AG04450 (cell line): ENCODE measurements at regions of chr1 and their contacts with region 1.

Region 1: DNA sequence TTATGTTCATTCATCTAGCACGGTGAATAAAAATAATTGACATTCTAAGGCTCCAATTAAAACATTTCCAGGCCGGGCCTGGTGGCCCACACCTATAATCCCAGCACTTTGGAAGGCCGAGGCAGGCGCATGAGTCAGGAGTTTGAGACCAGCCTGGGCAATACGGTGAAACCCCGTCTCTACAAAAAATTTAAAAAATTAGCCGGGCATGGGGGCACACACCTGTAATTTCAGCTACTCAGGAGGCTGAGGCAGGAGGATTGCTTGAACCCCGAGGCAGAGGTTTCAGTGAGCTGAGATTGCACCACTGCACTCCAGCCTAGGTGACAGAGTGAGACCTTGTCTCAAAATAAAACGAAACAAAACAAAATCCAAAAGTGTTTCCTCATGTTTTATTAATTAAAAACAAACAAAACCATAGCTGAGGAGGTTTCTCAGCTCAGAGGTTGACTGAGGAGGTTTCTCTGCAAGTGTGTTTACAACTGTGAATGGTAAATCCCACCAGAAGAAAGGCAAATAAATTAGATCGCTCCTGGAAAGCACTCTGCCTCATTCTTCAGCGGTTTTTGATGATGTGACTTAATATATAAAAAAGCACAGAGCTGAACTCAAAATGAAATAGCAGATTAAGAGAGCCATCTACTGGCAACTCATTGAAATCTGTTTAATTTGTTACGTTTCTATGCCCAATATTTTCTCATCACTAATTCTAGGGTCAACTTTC is 37.7 kb upstream of the ATG4C start:
- DNase-seq: no peak
- H3K4me3 ChIP-seq: peak overlapping the region; percentile 1; the same call in 1 of the 2 replicates
- H3K27ac ChIP-seq: no peak overlapping the region
- H3K27me3 ChIP-seq: no peaks in the 10 kb centered on the region
- CTCF ChIP-seq: peak; percentile 65

Region 2: GRCh38 chr1:62175568-62176179 is 570.6 kb before region 1 on chr1:
- CTCF ChIA-PET with region 1: interaction called, 14 read pairs
- POLR2A ChIA-PET with region 1: no interaction called
- DNase-seq: peak; percentile 10
- H3K4me3 ChIP-seq: no peak overlapping the region
- H3K27ac ChIP-seq: no peak overlapping the region
- H3K27me3 ChIP-seq: no peaks in the 10 kb centered on the region
- CTCF ChIP-seq: peak; percentile 74

Region 3: DNA sequence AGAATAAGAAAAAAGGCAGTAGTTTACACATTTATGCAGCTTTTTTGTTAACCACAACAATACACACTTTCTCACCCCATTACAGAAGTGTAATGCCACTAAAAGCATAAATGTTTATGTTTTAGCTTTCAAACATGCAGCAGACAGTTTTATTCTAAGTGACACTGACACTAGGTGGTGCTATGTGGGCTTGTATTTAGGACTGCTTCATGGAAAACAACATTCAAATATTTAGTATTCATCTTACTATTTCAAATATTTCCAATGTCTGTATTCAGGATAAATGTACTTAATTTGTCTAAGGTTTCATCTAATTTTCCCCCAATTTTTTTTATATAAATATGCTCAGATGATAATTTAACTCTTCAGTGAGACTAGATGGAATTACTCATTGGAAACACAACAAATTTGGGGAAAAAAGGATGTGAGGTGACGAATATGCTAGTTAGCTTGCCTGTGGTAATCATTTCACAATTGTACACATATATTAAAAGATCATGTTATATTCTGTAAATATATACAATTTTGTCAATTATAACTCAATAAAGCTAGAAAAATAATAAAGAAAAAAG is 238.0 kb before region 1 on chr1:
- CTCF ChIA-PET with region 1: interaction called, 137 read pairs
- POLR2A ChIA-PET with region 1: no interaction called
- DNase-seq: peak; percentile 11
- H3K4me3 ChIP-seq: no peak overlapping the region
- H3K27ac ChIP-seq: no peak overlapping the region
- H3K27me3 ChIP-seq: no peaks in the 10 kb centered on the region
- CTCF ChIP-seq: peak; percentile 67

Region 4: GRCh38 chr1:62523860-62524259 is 222.4 kb before region 1 on chr1:
- CTCF ChIA-PET with region 1: interaction called, 166 read pairs
- POLR2A ChIA-PET with region 1: no interaction called
- DNase-seq: no peak
- H3K4me3 ChIP-seq: no peak overlapping the region
- H3K27ac ChIP-seq: no peak overlapping the region
- H3K27me3 ChIP-seq: no peaks in the 10 kb centered on the region
- CTCF ChIP-seq: no peak

Region 5: GRCh38 chr1:62539028-62539447 is 207.2 kb before region 1 on chr1:
- CTCF ChIA-PET with region 1: interaction called, 28 read pairs
- POLR2A ChIA-PET with region 1: no interaction called
- DNase-seq: no peak
- H3K4me3 ChIP-seq: no peak overlapping the region
- H3K27ac ChIP-seq: no peak overlapping the region
- H3K27me3 ChIP-seq: no peaks in the 10 kb centered on the region
- CTCF ChIP-seq: no peak

Region 6: DNA sequence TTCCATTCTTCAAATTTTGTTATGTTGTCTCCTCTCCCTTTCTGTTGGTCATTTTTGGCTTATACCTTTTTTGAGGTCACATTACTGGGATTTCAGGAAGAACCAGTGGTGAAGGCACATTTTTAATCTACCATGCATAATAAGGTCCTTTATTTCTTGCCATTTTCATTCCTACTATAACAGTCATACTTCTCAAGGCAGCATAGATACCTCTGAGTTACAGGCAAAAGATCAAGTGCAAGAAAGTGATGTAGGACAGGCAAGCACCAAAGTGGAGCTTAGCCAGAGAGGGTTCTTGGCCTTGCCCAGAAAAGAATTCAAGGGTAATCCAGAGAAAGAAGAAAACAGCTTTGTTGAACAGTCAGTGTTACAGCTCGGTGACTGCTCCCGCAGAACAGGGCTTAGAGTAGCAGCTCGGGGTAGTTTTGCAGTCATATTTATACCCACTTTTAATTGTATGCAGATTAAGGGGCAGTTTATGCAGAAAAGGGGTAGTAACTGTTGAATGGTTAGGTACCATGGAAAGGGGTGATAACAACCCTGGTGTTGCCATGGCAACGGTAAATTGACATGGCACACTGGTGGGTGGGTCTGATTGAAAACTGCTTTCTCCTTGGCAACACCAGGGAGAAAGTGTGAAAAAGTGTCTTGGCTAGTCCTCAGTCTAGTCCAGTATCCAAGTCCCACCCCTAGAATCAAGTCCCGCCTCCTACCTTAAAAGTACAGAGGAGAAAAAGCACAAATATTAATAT is 18.4 kb before region 1 on chr1:
- CTCF ChIA-PET with region 1: interaction called, 12 read pairs
- POLR2A ChIA-PET with region 1: no interaction called
- DNase-seq: no peak
- H3K4me3 ChIP-seq: no peak overlapping the region
- H3K27ac ChIP-seq: no peak overlapping the region
- H3K27me3 ChIP-seq: no peaks in the 10 kb centered on the region
- CTCF ChIP-seq: no peak